WTC11 (cell line): ENCODE measurements at regions of chr16 and their contacts with region 1.

Region 1: GRCh38 chr16:1705688-1706385 is at the start of gene MAPK8IP3:
- DNase-seq: peak; percentile 92
- ATAC-seq: peak; percentile 73
- H3K4me3 Mint-ChIP-seq: peak within 1 kb of the TSS; percentile 99
- H3K27ac Mint-ChIP-seq: peak within 1 kb of the TSS; percentile 98
- H3K4me1 Mint-ChIP-seq: peaks cover 20% of the 10 kb centered on the region
- H3K27me3 Mint-ChIP-seq: no peaks in the 10 kb centered on the region
- CTCF ChIP-seq: peak; percentile 94
- total RNA-seq, gene MAPK8IP3: 59.7 to 72.3 TPM (median 63.2 TPM) in 3 replicates

Region 2: GRCh38 chr16:1610276-1611017 is 95.4 kb before region 1 on chr16:
- CTCF ChIA-PET with region 1: interaction called, 24 read pairs
- POLR2A ChIA-PET with region 1: interaction called, 6 read pairs
- DNase-seq: peak; percentile 95
- ATAC-seq: peak; percentile 74
- H3K4me3 Mint-ChIP-seq: peak overlapping the region; percentile 91
- H3K27ac Mint-ChIP-seq: peak overlapping the region; percentile 22; the same call in 1 of the 2 replicates
- H3K4me1 Mint-ChIP-seq: peaks cover 23% of the 10 kb centered on the region
- H3K27me3 Mint-ChIP-seq: peaks cover 23% of the 10 kb centered on the region
- CTCF ChIP-seq: no peak

Region 3: GRCh38 chr16:1677802-1678496 is 27.9 kb before region 1 on chr16 and contains the start of gene JPT2:
- CTCF ChIA-PET with region 1: interaction called, 36 read pairs
- POLR2A ChIA-PET with region 1: interaction called, 12 read pairs
- DNase-seq: peak; percentile 98
- ATAC-seq: peak; percentile 95
- H3K4me3 Mint-ChIP-seq: peak within 1 kb of the TSS; percentile 90
- H3K27ac Mint-ChIP-seq: peak within 1 kb of the TSS; percentile 95
- H3K4me1 Mint-ChIP-seq: peaks cover 31% of the 10 kb centered on the region
- H3K27me3 Mint-ChIP-seq: no peaks in the 10 kb centered on the region
- CTCF ChIP-seq: no peak
- total RNA-seq, gene JPT2: 150 to 169 TPM (median 157 TPM) in 3 replicates

Region 4: GRCh38 chr16:1723450-1724147 is 17.8 kb after region 1 on chr16:
- CTCF ChIA-PET with region 1: interaction called, 45 read pairs
- POLR2A ChIA-PET with region 1: no interaction called
- DNase-seq: peak; percentile 65
- ATAC-seq: peak; percentile 71
- H3K4me3 Mint-ChIP-seq: no peak overlapping the region
- H3K27ac Mint-ChIP-seq: no peak overlapping the region
- H3K4me1 Mint-ChIP-seq: 0 out of 2 replicates have a peak, but pooled peaks cover 3% of the 10 kb centered on the region
- H3K27me3 Mint-ChIP-seq: no peaks in the 10 kb centered on the region
- CTCF ChIP-seq: peak; percentile 69

Region 5: GRCh38 chr16:1763521-1764511 is 58.0 kb after region 1 on chr16:
- CTCF ChIA-PET with region 1: interaction called, 16 read pairs
- POLR2A ChIA-PET with region 1: no interaction called
- DNase-seq: peak; percentile 91
- ATAC-seq: peak; percentile 82
- H3K4me3 Mint-ChIP-seq: peak overlapping the region; percentile 45
- H3K27ac Mint-ChIP-seq: no peak overlapping the region
- H3K4me1 Mint-ChIP-seq: no peaks in the 10 kb centered on the region
- H3K27me3 Mint-ChIP-seq: no peaks in the 10 kb centered on the region
- CTCF ChIP-seq: peak; percentile 48

Region 6: DNA sequence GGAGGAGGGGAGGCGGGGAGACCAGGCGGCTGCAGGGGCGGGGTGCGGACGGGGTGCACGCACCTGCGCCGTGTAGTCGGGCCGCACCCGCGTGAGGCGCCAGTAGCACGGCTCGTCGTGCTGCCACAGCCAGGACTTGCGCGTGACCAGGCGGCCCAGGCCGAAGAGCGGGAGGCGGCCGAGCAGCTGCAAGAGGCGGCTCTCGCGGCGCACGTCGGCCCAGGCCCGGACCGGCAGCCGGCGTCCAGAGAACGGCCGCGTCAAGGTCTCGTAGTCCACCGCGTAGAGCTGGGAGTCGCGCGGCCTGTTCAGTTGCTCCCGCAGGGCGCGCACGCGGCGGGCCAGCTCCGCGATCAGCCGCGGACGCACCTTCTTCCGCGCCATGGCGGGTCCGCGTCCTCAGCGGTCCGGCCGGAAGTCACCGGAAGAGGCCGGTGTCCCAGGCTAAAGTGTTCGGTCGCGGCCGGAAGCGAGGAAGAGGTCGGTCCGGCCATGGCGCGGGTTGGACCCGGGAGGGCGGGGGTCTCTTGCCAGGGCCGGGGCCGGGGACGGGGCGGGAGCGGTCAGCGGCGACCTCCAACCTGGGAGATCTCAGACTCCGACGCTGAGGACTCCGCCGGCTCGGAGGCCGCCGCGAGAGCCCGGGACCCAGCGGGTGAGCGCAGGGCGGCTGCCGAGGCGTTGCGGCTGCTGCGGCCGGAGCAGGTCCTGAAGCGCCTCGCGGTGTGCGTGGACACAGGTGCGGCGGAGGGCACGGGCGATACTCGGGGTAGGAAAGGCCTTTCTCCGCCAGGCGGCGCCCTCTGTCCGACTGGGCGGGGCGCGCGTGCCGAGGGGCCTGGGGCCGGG is 67.1 kb after region 1 on chr16 and contains the starts of genes EME2 and MRPS34:
- CTCF ChIA-PET with region 1: interaction called, 11 read pairs
- POLR2A ChIA-PET with region 1: interaction called, 5 read pairs
- DNase-seq: peak; percentile 88
- ATAC-seq: peak; percentile 56
- H3K4me3 Mint-ChIP-seq: peak within 1 kb of the TSS; percentile 99
- H3K27ac Mint-ChIP-seq: peak within 1 kb of the TSS; percentile 98
- H3K4me1 Mint-ChIP-seq: peaks cover 4% of the 10 kb centered on the region
- H3K27me3 Mint-ChIP-seq: no peaks in the 10 kb centered on the region; the same call in 1 of the 2 replicates
- CTCF ChIP-seq: peak; percentile 74
- total RNA-seq, gene EME2: 23.2 to 30.8 TPM (median 25.7 TPM) in 3 replicates
- total RNA-seq, gene MRPS34: 258 to 262 TPM (median 261 TPM) in 3 replicates

Region 7: DNA sequence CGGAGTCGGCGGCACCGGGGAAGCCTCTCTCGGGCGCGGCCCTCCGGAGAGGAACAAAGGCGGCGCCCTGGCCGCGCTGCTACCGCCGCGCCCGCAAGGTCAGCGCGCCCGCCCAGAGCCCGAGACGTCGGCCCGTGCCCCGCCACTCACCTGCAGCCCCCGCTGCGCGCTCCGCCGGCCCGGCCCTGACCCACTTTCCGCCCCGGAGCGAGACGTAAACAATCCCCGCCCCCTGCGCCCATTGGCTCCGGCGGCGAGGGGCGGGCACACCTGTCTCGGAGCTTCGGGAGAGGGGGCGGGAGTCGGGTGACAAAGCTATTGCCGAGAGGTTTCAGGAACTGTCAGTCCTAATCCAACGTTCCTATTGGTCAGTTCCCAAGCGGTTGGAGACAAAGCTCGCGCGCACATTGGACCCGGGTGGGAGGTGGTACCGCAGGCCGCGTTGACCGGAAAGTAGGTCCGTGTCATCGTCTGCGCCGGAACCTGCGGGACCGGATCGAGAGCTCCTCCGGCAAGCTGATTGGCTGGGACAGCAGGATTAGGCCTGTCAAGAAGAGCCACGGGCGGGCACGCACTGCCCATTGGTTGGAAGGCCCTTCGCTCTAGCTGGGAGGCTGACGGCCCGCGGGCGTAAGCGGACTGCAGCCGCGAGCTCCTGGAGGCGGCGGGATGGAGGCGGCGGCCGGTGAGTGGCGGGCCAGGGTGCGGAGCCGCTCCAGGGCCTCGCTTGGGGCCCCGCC is 76.7 kb after region 1 on chr16 and contains the starts of genes NUBP2 and SPSB3:
- CTCF ChIA-PET with region 1: interaction called, 20 read pairs
- POLR2A ChIA-PET with region 1: interaction called, 6 read pairs
- DNase-seq: peak; percentile 99
- ATAC-seq: peak; percentile 87
- H3K4me3 Mint-ChIP-seq: peak within 1 kb of the TSS; percentile 93
- H3K27ac Mint-ChIP-seq: peak within 1 kb of the TSS; percentile 83
- H3K4me1 Mint-ChIP-seq: peaks cover 7% of the 10 kb centered on the region
- H3K27me3 Mint-ChIP-seq: no peaks in the 10 kb centered on the region
- CTCF ChIP-seq: no peak
- total RNA-seq, gene NUBP2: 76.4 to 89.2 TPM (median 77.6 TPM) in 3 replicates
- total RNA-seq, gene SPSB3: 27.2 to 32.8 TPM (median 28.4 TPM) in 3 replicates